ENCODE measurements at regions of chr4 and their contacts with region 1.

Region 1: GRCh38 chr4:11765849-11766453 is 337.3 kb upstream of the HS3ST1 start:
- DNase-seq: no peak
- ATAC-seq: no peak
- H3K4me3 ChIP-seq: no peak overlapping the region
- H3K27ac ChIP-seq: no peak overlapping the region
- H3K4me1 ChIP-seq: no peaks in the 10 kb centered on the region
- H3K27me3 ChIP-seq: no peaks in the 10 kb centered on the region
- CTCF ChIP-seq: peak; percentile 58 to 85 (median 71)
- POLR2A ChIP-seq: no peak

Region 2: GRCh38 chr4:12729384-12729783 is 963.4 kb after region 1 on chr4:
- intact Hi-C with region 1: loop called in 1 of 10 experiments (anchors 5 kb)
- DNase-seq: no peak
- ATAC-seq: no peak
- H3K4me3 ChIP-seq: no peak overlapping the region
- H3K27ac ChIP-seq: no peak overlapping the region
- H3K4me1 ChIP-seq: no peaks in the 10 kb centered on the region
- H3K27me3 ChIP-seq: peaks cover 0 to 9% (median 0%) of the 10 kb centered on the region in 9 donors
- CTCF ChIP-seq: peak; percentile 23 to 55 (median 48)
- POLR2A ChIP-seq: no peak

Measured in heart left ventricle (tissue), 16 donors.